Heart right ventricle (tissue), 16 donors: ENCODE measurements at regions of chr14 and their contacts with region 1.

Region 1: DNA sequence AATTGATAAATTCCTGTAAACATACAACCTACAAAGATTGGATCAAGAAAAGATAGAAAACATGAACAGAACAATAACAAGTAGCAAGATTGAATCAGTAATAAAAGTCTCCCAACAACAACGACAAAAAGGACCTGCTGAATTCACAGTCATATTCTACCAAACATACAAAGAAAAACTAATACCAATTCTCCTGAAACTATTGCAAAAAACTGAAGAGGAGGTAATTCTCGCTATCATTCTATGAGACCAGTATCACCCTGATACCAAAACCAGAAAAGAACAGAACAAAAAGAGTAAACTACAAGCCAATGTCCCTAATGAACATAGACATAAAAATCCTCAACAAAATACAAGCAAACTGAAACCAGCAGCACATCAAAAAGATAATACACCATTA is 14.4 kb downstream of the SLC25A21 start:
- DNase-seq: no peak
- ATAC-seq: no peak
- H3K4me3 ChIP-seq: no peak overlapping the region
- H3K27ac ChIP-seq: no peak overlapping the region
- H3K4me1 ChIP-seq: no peaks in the 10 kb centered on the region
- H3K27me3 ChIP-seq: peaks cover 0 to 4% (median 0%) of the 10 kb centered on the region in 7 donors
- CTCF ChIP-seq: no peak

Region 2: DNA sequence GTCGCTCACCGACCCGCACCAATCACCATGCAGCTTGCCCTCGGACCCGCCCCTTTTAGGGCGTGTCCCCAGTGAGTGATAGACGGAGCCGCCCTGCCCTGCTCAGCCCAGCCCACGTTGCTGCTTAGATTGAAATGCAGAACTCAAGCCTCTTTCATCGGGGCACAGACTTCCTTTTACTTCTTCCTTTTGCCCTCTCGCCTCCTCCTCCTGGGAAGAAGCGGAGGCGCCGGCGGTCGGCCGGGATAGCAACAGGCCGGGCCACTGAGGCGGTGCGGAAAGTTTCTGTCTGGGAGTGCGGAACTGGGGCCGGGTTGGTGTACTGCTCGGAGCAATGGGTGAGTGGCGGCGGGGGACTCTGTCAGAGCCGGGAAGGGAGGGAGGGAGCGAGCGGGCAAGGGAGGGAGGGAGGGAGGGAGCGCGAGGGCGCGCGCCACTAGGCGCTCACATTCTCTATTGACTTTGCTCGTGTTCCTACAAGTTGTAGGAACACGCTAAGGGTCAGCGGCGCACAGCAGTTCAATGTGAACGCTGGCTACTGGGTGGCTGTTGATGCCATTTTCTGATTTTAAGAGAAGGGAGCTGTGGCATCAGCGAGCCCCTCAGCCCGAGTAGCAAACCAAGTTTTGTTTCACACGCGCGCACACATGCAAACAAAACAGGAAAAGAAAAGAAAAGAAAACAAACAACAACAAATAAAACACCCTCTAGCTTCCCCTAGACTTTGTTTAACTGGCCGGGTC is 496.1 kb before region 1 on chr14 and contains the start of gene PAX9:
- intact Hi-C with region 1: loop called in 2 of 10 experiments (anchors 5 to 10 kb)
- DNase-seq: no peak
- ATAC-seq: peak; percentile 76 to 92 (median 81)
- H3K4me3 ChIP-seq: peak within 1 kb of the TSS in 9 of 10 donors; percentile 9 to 40 (median 30)
- H3K27ac ChIP-seq: no peak within 1 kb of the TSS
- H3K4me1 ChIP-seq: peaks cover 15 to 71% (median 60%) of the 10 kb centered on the region in 9 donors
- H3K27me3 ChIP-seq: peaks cover 65 to 100% (median 100%) of the 10 kb centered on the region in 7 donors
- CTCF ChIP-seq: no peak
- total RNA-seq, gene PAX9: not detected